ENCODE measurements at regions of chrX and their contacts with region 1.

Region 1: DNA sequence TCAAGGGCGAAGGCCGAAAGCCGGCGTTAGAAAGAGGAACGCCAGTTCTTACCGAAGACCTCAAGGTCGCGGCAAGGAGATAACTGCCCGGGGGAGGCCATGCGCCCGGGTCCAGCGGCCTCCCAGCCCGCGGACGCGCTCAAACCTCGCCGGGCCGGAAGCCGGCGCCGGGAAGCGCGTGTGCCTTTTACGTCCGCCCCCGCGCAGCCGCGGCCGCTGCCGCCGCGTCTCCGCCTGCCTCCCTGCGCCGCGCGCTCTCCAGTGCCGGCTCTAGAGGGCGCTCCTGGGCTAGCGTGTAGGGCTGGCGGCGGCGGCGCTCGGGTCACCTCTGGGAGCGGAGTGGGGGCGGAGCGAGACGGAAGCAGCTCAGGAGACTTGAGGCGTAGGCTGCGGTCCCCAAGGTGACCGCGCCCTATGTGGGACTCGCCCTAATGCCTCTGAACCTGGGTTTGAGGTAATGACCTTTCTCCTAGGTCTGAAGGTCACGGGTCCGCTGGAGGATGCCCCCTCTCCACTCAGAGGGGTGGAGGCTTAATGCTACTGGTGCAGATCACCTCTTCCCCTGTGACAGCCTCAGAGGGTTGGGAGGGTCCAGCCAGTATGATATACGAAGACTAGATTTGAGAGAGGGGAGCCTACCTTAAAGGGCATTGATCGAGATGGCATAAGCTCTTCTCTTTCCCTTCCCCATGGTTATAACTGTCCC is 839 bp downstream of the SLC25A5 start:
- DNase-seq: peak; percentile 92
- H3K4me3 Mint-ChIP-seq: peak overlapping the region; percentile 83
- H3K27ac Mint-ChIP-seq: peak overlapping the region; percentile 92
- H3K4me1 Mint-ChIP-seq: peaks cover 15% of the 10 kb centered on the region
- H3K27me3 Mint-ChIP-seq: no peaks in the 10 kb centered on the region

Region 2: GRCh38 chrX:119235872-119236622 is 233.0 kb before region 1 on chrX and contains the start of gene PGRMC1:
- CTCF ChIA-PET with region 1: no interaction called
- intact Hi-C with region 1: loop called (anchors 1 kb)
- DNase-seq: peak; percentile 81
- H3K4me3 Mint-ChIP-seq: peak within 1 kb of the TSS; percentile 86
- H3K27ac Mint-ChIP-seq: peak within 1 kb of the TSS; percentile 71
- H3K4me1 Mint-ChIP-seq: peaks cover 30% of the 10 kb centered on the region
- H3K27me3 Mint-ChIP-seq: no peaks in the 10 kb centered on the region
- total RNA-seq, gene PGRMC1: 26.3 to 27.0 TPM

Region 3: DNA sequence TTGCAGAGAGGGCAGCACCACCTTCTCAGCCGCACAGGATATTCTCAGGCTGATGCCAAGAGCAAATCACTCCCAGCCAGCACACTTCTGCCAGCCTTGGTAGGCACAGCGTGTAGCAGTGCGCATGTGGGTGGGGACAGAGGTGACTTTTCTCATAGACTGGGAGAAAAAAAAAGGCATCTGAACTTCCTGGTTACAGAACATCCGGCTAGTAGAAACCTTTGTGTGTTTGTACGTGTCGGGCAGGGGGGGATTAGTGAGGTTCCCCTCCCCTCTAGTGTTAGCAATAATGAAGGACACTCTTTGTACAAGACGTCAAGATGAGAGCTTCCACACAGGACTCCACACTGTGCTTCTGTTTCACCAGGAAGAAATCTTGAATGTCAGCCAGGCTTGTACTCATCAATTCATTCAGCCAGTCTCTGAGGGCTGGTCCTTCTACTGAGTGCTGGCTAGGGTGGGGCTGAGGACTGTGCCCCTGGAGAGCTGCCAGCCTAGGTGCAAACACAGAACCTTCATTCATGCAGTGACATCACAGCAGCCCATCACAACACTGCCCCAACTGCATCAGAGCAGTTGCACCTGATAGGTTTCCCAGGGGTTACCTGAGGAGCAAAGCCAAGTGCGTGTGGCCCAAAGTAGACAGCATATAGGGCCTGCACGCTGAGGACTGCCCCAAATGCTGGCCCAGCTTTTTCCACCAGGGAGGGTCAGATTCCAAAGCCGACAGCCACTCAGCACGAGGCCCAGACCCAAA is 33.8 kb after region 1 on chrX:
- CTCF ChIA-PET with region 1: interaction called, 3 read pairs
- intact Hi-C with region 1: loop called (anchors 2 kb)
- DNase-seq: peak; percentile 49
- H3K4me3 Mint-ChIP-seq: no peak overlapping the region
- H3K27ac Mint-ChIP-seq: peak overlapping the region; percentile 77
- H3K4me1 Mint-ChIP-seq: peaks cover 16% of the 10 kb centered on the region
- H3K27me3 Mint-ChIP-seq: no peaks in the 10 kb centered on the region

Region 4: DNA sequence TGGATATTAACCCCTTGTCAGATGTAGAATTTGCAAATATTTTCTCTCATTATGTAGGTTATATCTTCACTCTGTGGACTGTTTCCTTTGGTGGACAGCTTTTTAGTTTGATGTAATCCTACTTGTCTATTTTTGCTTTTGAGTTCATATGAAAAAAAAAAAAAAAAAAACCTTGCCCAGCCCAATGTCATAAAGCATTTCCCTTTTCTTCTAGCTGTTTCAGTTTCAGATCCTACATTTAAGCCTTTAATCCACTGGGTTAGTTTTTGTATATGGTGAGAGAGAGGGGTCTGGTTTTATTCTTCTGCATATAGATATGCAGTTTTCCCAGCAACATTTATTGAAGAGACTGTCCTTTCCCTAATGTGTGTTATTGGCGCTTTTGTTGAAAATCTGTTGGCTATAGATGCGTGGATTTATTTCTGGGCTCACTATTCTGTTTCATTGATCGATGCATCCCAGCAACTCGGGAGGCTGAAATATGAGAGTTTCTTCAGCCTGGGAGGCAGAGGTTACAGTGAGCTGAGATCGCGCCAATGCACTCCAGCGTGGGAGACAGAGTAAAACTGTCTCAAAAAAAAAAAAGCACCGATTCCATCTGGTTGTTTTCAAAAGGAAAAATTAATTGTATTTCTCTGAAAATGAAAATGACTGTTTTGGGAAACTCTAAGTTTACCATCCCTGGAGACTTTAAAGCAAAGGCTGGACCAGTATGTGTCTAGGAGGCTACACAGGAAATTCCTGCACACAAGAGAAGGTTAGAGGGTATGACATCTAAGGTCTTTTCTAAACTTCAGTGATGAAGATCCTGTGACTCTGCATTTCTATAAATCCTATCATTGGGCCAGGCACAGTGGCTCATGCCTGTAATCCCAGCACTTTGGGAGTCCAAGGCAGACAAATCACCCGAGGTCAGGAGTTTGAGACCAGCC is 60.5 kb after region 1 on chrX:
- CTCF ChIA-PET with region 1: no interaction called
- intact Hi-C with region 1: no loop called
- DNase-seq: no peak
- H3K4me3 Mint-ChIP-seq: no peak overlapping the region
- H3K27ac Mint-ChIP-seq: no peak overlapping the region
- H3K4me1 Mint-ChIP-seq: no peaks in the 10 kb centered on the region
- H3K27me3 Mint-ChIP-seq: no peaks in the 10 kb centered on the region

Region 5: DNA sequence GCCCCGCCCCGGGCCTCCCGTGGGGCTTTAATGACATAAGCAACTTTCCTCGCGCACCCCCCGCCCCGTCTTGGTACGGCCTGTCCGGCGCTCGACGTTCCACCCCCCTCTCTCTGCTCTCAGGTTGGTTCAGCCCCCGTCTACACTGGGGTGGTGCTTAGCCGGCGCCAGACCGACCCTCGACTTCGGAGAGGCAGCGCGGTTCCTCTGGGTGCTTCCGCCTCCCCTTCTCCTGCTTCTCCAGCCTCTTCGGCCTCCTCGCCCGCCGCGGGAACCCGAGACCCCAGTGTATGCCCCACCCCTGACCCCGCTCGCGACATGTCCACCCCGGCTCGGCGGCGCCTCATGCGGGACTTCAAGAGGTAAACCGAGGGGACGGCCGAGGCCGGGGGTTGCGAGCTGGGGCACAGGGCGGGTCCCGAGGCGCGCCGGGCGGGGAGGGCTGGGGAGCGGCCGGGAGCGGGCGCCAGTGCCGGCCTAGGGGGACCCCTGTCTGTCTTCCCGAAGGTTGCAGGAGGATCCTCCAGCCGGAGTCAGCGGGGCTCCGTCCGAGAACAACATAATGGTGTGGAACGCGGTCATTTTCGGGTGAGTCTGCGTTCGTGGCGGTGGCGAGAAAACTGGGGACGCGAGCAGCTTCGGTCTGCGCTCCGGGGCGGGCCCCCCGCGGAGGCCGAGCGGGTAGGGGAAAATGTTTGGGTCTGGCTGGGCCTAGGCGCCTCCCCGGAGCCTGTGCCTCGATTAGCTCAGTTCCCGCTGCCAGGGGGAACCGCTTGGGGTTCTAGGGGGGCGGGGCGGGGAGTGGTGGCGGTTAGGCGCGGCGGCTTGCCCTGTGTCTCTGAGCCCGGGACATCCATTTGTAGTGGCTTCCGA is 105.5 kb after region 1 on chrX and contains the start of gene UBE2A:
- CTCF ChIA-PET with region 1: no interaction called
- intact Hi-C with region 1: loop called (anchors 2 kb)
- DNase-seq: peak; percentile 89
- H3K4me3 Mint-ChIP-seq: peak within 1 kb of the TSS; percentile 91
- H3K27ac Mint-ChIP-seq: peak within 1 kb of the TSS; percentile 89
- H3K4me1 Mint-ChIP-seq: peaks cover 12% of the 10 kb centered on the region
- H3K27me3 Mint-ChIP-seq: no peaks in the 10 kb centered on the region
- total RNA-seq, gene UBE2A: 46.1 to 49.8 TPM

Region 6: DNA sequence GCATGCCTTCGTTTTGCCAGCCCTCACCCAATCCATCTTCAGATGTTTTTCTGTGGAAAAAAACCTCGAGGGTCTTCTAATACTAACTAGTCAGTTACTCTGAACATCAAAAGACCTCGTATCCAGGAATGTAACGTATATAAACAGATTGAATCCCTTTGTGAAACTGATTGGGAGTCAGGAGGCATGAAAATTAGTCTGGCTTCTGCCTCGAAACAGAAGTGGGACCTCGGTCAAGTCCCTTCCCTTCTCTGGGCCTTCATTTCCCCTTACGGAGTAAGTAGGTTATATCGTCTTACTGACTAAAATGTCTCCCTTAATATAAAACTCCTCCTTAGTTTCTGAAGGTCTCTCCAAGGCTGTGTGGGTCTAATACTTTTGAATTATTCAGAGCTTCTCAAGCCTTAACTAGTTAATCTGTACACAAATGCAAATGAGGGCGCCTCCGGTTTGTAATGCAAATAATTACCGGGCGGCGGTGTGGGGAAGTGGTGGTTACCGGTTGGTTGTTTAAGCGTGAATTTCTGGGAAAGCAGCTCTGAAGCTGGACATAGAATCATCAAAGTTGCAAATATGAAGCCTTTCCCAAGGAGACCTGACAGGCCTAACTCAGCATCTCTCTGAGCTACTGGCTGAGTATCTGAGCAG is 148.6 kb after region 1 on chrX:
- CTCF ChIA-PET with region 1: no interaction called
- intact Hi-C with region 1: no loop called
- DNase-seq: no peak
- H3K4me3 Mint-ChIP-seq: no peak overlapping the region
- H3K27ac Mint-ChIP-seq: no peak overlapping the region
- H3K4me1 Mint-ChIP-seq: peaks cover 2% of the 10 kb centered on the region
- H3K27me3 Mint-ChIP-seq: no peaks in the 10 kb centered on the region

Region 7: DNA sequence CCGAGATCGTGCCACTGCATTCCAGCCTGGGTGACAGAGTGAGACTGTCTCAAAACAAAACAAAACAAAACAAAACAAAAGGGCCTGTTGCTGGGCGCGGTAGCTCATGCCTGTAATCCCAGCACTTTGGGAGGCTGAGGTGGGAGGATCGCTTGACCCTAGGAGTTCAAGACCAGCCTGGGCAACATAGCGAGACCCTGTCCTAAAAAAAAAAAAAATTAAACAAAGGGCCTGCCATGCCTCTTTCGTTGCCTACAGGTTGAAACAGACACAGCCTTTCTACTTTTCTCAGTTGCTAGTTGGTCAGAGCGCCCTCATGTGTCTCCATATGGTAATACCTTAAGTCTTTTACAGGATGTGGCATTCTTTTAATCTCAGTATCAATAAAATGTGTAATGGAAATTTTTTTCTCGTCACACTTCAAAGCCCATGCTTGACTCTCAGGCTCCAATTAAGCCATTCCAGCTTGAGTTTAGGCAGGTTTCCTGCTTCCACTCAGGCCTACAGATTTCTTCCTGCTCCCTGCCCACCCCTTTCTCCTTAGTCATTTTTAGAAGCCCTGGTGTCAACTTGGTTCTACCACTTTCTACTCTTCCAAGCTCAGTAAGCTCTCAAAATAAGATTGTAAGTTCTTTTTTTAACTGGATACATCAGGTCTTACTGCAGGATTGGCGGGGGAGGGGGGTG is 284.6 kb after region 1 on chrX:
- CTCF ChIA-PET with region 1: no interaction called
- intact Hi-C with region 1: loop called (anchors 1 kb)
- DNase-seq: peak; percentile 70
- H3K4me3 Mint-ChIP-seq: no peak overlapping the region
- H3K27ac Mint-ChIP-seq: peak overlapping the region; percentile 81
- H3K4me1 Mint-ChIP-seq: peaks cover 41% of the 10 kb centered on the region
- H3K27me3 Mint-ChIP-seq: no peaks in the 10 kb centered on the region

Region 8: GRCh38 chrX:119871599-119872395 is 402.7 kb after region 1 on chrX and contains the starts of genes NDUFA1 and RNF113A:
- CTCF ChIA-PET with region 1: no interaction called
- intact Hi-C with region 1: loop called (anchors 5 kb)
- DNase-seq: peak; percentile 86
- H3K4me3 Mint-ChIP-seq: peak within 1 kb of the TSS; percentile 97
- H3K27ac Mint-ChIP-seq: peak within 1 kb of the TSS; percentile 98
- H3K4me1 Mint-ChIP-seq: peaks cover 13% of the 10 kb centered on the region
- H3K27me3 Mint-ChIP-seq: no peaks in the 10 kb centered on the region
- total RNA-seq, gene NDUFA1: 105 to 107 TPM
- total RNA-seq, gene RNF113A: 20.8 to 22.0 TPM

Measured in activated naive CD4-positive, alpha-beta T cell treated with anti-CD3 and anti-CD28 coated beads for 36 hours (primary cell).